ENCODE measurements at regions of chr10 and their contacts with region 1.

Region 1: DNA sequence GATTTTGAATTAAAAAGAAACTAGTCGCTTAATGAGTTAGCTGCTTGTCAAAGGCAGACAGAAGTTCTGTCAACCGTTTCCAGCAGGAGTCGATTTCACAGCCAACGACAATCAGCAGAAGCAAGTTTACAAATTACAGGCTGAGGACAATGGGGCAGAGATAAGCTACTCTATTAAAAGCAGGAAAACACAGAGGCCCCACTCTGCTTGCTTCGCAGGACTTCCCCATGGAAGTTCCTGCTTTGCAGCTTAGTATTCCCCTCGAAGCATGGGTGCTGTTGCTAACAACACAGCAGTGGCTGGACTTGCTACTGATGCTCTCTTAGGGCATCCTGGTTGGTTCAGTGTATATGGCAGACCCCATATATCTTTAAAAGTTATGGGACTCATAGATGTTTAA is 50.8 kb upstream of the KLF6 start:
- DNase-seq: no peak
- ATAC-seq: peak; percentile 75
- H3K4me3 ChIP-seq: peak overlapping the region; percentile 46
- H3K27ac ChIP-seq: peak overlapping the region; percentile 88
- H3K4me1 ChIP-seq: peaks cover 23% of the 10 kb centered on the region
- H3K27me3 ChIP-seq: no peaks in the 10 kb centered on the region
- CTCF ChIP-seq: no peak
- EP300 ChIP-seq: no peak; a peak in 1 of 4 replicates
- POLR2A ChIP-seq: no peak
- RAD21 ChIP-seq: no peak

Region 2: DNA sequence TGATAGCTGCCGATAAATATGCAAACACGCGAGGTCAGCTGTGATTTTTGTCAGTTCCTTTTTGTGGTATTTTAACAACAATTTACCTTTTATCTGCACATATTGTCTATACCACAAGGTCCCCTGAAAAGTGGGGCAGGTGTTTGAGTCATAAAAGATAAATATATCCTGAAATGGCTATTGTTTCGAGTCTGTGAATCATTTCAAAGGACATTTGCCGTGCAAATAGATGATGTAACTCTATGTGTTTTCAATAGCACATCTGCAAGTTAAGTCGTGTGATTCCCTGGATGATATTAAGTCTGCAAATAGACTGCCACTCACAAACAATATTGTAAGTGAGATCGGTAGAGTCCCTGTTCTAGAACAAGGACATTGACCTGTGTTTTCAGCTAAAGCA is 470.1 kb before region 1 on chr10:
- CTCF ChIA-PET with region 1: no interaction called
- POLR2A ChIA-PET with region 1: no interaction called
- RAD21 ChIA-PET with region 1: no interaction called
- SMC1A ChIA-PET with region 1: no interaction called
- in situ Hi-C with region 1: no loop called
- intact Hi-C with region 1: no loop called
- DNase-seq: no peak
- ATAC-seq: no peak
- H3K4me3 ChIP-seq: no peak overlapping the region
- H3K27ac ChIP-seq: no peak overlapping the region
- H3K4me1 ChIP-seq: no peaks in the 10 kb centered on the region
- H3K27me3 ChIP-seq: no peaks in the 10 kb centered on the region
- CTCF ChIP-seq: no peak
- EP300 ChIP-seq: no peak
- POLR2A ChIP-seq: no peak
- RAD21 ChIP-seq: no peak

Region 3: GRCh38 chr10:3757638-3758490 is 77.9 kb before region 1 on chr10:
- CTCF ChIA-PET with region 1: no interaction called
- POLR2A ChIA-PET with region 1: interaction called, 3 read pairs
- RAD21 ChIA-PET with region 1: interaction called, 13 read pairs
- SMC1A ChIA-PET with region 1: interaction called, 10 read pairs
- in situ Hi-C with region 1: no loop called
- intact Hi-C with region 1: no loop called
- DNase-seq: peak; percentile 82
- ATAC-seq: peak; percentile 88
- H3K4me3 ChIP-seq: no peak overlapping the region; the same call in 1 of the 2 replicates
- H3K27ac ChIP-seq: peak overlapping the region; percentile 76
- H3K4me1 ChIP-seq: peaks cover 35% of the 10 kb centered on the region
- H3K27me3 ChIP-seq: no peaks in the 10 kb centered on the region
- CTCF ChIP-seq: no peak
- EP300 ChIP-seq: peak; percentile 65 to 81; a peak in 3 of 4 replicates
- POLR2A ChIP-seq: peak; percentile 44; the same call in 1 of the 2 replicates
- RAD21 ChIP-seq: peak; percentile 9; the same call in 1 of the 2 replicates

Region 4: DNA sequence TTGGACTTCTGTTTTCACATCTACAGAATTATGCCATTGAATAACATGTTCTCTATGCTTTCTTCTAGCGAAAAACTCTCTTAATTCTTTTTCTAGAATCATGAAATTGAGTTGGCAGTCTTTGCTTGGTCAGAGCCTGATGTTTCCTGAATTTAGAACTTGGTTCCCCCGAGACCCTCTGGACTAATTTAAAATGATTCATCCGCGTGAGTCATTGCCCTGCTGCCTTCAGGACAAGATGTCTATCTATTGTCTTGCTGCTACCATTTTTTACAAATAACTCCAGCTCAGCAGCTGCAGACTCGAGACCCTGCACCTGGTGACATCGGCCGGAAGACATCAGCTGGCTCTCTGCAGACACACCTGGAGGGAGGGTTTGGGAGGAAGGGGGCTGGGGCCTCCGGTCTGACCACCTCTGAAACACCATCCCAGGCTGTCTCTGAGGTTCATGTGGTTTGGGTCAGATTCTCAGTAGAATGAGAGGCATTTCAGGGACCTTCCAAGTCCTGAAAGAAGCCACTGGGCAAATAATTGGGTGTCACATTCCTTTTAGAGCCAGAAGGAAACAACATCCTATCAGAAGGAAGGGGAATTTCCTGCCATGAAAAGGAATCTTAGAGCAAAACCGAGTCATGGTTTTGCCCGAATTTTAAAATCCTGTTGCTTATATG is 29.8 kb before region 1 on chr10:
- CTCF ChIA-PET with region 1: interaction called, 7 read pairs
- POLR2A ChIA-PET with region 1: interaction called, 38 read pairs
- RAD21 ChIA-PET with region 1: interaction called, 49 read pairs
- SMC1A ChIA-PET with region 1: interaction called, 280 read pairs
- in situ Hi-C with region 1: no loop called
- intact Hi-C with region 1: loop called (anchors 1 kb)
- DNase-seq: no peak
- ATAC-seq: peak; percentile 54
- H3K4me3 ChIP-seq: 0 out of 2 replicates have a peak overlapping the region, but pooled peaks have one; percentile 29
- H3K27ac ChIP-seq: peak overlapping the region; percentile 85
- H3K4me1 ChIP-seq: peaks cover 48% of the 10 kb centered on the region
- H3K27me3 ChIP-seq: no peaks in the 10 kb centered on the region
- CTCF ChIP-seq: no peak
- EP300 ChIP-seq: peak; percentile 46 to 65; a peak in 2 of 4 replicates
- POLR2A ChIP-seq: no peak; the same call in 1 of the 2 replicates
- RAD21 ChIP-seq: no peak

Region 5: GRCh38 chr10:3811291-3811870 is 24.4 kb before region 1 on chr10:
- CTCF ChIA-PET with region 1: interaction called, 7 read pairs
- POLR2A ChIA-PET with region 1: interaction called, 38 read pairs
- RAD21 ChIA-PET with region 1: interaction called, 49 read pairs
- SMC1A ChIA-PET with region 1: interaction called, 280 read pairs
- in situ Hi-C with region 1: no loop called
- intact Hi-C with region 1: loop called (anchors 1 kb)
- DNase-seq: peak; percentile 76
- ATAC-seq: peak; percentile 87
- H3K4me3 ChIP-seq: peak overlapping the region; percentile 55; the same call in 1 of the 2 replicates
- H3K27ac ChIP-seq: peak overlapping the region; percentile 82
- H3K4me1 ChIP-seq: peaks cover 42% of the 10 kb centered on the region
- H3K27me3 ChIP-seq: no peaks in the 10 kb centered on the region
- CTCF ChIP-seq: no peak
- EP300 ChIP-seq: peak; percentile 62 to 69; a peak in 3 of 4 replicates
- POLR2A ChIP-seq: peak; percentile 24; the same call in 1 of the 2 replicates
- RAD21 ChIP-seq: peak; percentile 26; the same call in 1 of the 2 replicates

Region 6: DNA sequence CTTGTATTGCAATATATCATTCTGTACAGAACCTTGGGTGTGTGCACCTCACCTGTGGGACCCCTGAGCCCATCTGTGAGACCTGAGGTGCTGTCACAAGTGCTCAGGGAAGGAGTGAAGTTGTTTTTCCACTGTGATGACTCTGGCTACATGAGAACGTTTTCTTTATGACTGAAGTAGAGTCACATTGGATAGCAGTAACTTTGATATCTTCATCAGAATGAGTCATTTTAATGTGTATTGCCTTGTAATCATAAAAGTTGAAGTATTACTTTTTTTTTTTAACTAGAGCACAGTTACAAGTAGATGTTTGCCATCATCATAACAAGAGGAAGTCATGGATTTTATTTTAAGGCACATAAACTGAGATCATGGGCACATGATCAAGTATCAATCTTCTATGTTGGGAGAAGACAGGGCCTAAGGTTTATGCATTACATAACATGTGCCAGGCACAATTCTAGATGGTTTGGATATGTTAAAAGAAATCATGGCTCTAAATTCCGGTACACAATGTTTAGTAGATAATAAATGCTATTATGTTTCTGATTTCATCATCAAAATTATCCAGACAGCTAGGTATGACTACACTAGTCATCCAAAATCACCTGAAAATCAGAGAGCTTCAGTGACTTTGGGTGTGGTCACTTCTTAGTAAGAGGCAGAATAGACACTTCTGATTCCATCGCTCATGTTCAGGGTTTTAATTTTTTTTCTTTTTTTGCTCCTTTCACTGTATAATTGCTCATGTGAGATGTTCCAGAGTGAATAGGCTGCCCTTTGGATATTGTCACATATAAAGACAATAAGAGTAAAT is 31.9 kb after region 1 on chr10:
- CTCF ChIA-PET with region 1: interaction called, 7 read pairs
- POLR2A ChIA-PET with region 1: interaction called, 5 read pairs
- RAD21 ChIA-PET with region 1: interaction called, 20 read pairs
- SMC1A ChIA-PET with region 1: interaction called, 38 read pairs
- in situ Hi-C with region 1: no loop called
- intact Hi-C with region 1: no loop called
- DNase-seq: no peak
- ATAC-seq: no peak
- H3K4me3 ChIP-seq: no peak overlapping the region
- H3K27ac ChIP-seq: no peak overlapping the region
- H3K4me1 ChIP-seq: peaks cover 39% of the 10 kb centered on the region
- H3K27me3 ChIP-seq: no peaks in the 10 kb centered on the region
- CTCF ChIP-seq: no peak
- EP300 ChIP-seq: no peak
- POLR2A ChIP-seq: no peak
- RAD21 ChIP-seq: no peak

Region 7: DNA sequence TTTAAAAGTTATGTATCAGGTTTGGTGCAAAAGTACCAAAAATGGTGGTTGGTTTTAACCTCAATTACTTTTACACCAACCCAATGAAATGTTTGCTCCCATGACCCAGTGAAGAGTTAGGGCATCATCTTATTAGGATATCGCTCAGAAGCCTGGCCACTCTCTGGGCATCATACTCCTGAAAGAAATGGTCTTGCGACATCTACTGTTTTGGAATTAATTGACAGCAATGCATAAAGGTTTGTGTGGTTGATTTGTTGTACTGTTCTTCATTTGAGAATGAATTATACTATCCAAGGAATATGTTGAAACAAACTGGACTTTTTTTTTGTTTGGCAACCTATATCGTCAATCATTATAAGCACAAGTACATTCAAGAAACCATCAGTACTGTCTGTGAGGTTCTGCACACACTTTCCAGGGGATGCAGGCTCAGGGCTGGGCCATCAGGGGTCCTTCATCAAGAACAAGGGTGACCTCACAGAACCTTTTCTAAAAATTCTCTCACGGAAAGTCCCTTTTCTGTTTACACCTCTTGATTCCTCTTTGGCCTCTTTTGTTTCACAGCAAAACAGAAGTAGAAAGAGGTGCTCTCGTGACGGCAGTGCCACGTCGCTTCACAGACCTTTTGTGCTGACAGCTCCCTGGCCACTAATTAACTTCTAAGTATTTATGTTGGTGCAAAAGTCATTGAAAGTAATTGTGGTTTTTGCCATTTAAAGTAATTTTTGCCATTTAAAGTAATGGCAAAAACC is 66.5 kb after region 1 on chr10:
- CTCF ChIA-PET with region 1: interaction called, 4 read pairs
- POLR2A ChIA-PET with region 1: interaction called, 3 read pairs
- RAD21 ChIA-PET with region 1: interaction called, 3 read pairs
- SMC1A ChIA-PET with region 1: interaction called, 12 read pairs
- in situ Hi-C with region 1: no loop called
- intact Hi-C with region 1: loop called (anchors 1 kb)
- DNase-seq: peak; percentile 93
- ATAC-seq: peak; percentile 95
- H3K4me3 ChIP-seq: no peak overlapping the region; the same call in 1 of the 2 replicates
- H3K27ac ChIP-seq: peak overlapping the region; percentile 75
- H3K4me1 ChIP-seq: peaks cover 25% of the 10 kb centered on the region
- H3K27me3 ChIP-seq: no peaks in the 10 kb centered on the region
- CTCF ChIP-seq: peak; percentile 18 to 38 (median 25); a peak in 4 of 6 replicates
- EP300 ChIP-seq: peak; percentile 99; a peak in 3 of 4 replicates
- POLR2A ChIP-seq: no peak
- RAD21 ChIP-seq: peak; percentile 70

Region 8: GRCh38 chr10:3942937-3943489 is 107.2 kb after region 1 on chr10:
- CTCF ChIA-PET with region 1: no interaction called
- POLR2A ChIA-PET with region 1: no interaction called
- RAD21 ChIA-PET with region 1: no interaction called
- SMC1A ChIA-PET with region 1: no interaction called
- in situ Hi-C with region 1: no loop called
- intact Hi-C with region 1: no loop called
- DNase-seq: no peak
- ATAC-seq: no peak
- H3K4me3 ChIP-seq: no peak overlapping the region
- H3K27ac ChIP-seq: no peak overlapping the region
- H3K4me1 ChIP-seq: no peaks in the 10 kb centered on the region
- H3K27me3 ChIP-seq: no peaks in the 10 kb centered on the region
- CTCF ChIP-seq: no peak
- EP300 ChIP-seq: no peak
- POLR2A ChIP-seq: no peak
- RAD21 ChIP-seq: no peak

Region 9: GRCh38 chr10:4101918-4102654 is 266.3 kb after region 1 on chr10:
- CTCF ChIA-PET with region 1: no interaction called
- POLR2A ChIA-PET with region 1: no interaction called
- RAD21 ChIA-PET with region 1: no interaction called
- SMC1A ChIA-PET with region 1: no interaction called
- in situ Hi-C with region 1: no loop called
- intact Hi-C with region 1: no loop called
- DNase-seq: peak; percentile 12
- ATAC-seq: peak; percentile 58
- H3K4me3 ChIP-seq: no peak overlapping the region
- H3K27ac ChIP-seq: no peak overlapping the region
- H3K4me1 ChIP-seq: peaks cover 9% of the 10 kb centered on the region
- H3K27me3 ChIP-seq: no peaks in the 10 kb centered on the region
- CTCF ChIP-seq: no peak
- EP300 ChIP-seq: no peak
- POLR2A ChIP-seq: no peak
- RAD21 ChIP-seq: no peak